ENCODE measurements at regions of chr12 and their contacts with region 1.

Region 1: GRCh38 chr12:54207484-54208294 is 18.9 kb upstream of the SMUG1 start:
- DNase-seq: peak; percentile 80
- H3K4me3 Mint-ChIP-seq: no peak overlapping the region
- H3K27ac Mint-ChIP-seq: no peak overlapping the region
- H3K4me1 Mint-ChIP-seq: peaks cover 7% of the 10 kb centered on the region
- H3K27me3 Mint-ChIP-seq: peaks cover 54% of the 10 kb centered on the region

Region 2: DNA sequence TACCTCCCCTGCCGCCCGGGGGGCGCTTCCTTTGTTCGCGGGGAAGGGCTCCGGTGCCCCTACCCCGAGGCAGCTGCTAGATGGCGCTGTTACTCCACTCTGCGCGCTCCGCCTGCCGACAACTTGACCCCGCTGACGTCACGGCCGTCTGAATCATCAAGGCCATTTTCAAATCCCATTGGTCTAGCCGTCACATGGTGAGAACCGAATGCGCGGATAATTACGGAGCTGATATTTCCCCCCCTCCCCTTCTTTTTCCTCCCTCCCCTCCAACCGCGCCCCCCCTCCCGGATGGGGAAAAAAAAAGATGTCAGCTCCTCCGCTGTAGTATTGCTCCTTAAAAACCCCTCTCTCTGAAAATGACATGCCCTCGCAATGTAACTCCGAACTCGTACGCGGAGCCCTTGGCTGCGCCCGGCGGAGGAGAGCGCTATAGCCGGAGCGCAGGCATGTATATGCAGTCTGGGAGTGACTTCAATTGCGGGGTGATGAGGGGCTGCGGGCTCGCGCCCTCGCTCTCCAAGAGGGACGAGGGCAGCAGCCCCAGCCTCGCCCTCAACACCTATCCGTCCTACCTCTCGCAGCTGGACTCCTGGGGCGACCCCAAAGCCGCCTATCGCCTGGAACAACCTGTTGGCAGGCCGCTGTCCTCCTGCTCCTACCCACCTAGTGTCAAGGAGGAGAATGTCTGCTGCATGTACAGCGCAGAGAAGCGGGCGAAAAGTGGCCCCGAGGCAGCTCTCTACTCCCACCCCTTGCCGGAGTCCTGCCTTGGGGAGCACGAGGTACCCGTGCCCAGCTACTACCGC is 222.6 kb before region 1 on chr12 and contains the start of gene HOXC10:
- CTCF ChIA-PET with region 1: interaction called, 12 read pairs
- POLR2A ChIA-PET with region 1: no interaction called
- DNase-seq: peak; percentile 88
- H3K4me3 Mint-ChIP-seq: peak within 1 kb of the TSS; percentile 48
- H3K27ac Mint-ChIP-seq: peak within 1 kb of the TSS; percentile 47
- H3K4me1 Mint-ChIP-seq: peaks cover 31% of the 10 kb centered on the region
- H3K27me3 Mint-ChIP-seq: peaks cover 94% of the 10 kb centered on the region
- total RNA-seq, gene HOXC10: not detected

Region 3: DNA sequence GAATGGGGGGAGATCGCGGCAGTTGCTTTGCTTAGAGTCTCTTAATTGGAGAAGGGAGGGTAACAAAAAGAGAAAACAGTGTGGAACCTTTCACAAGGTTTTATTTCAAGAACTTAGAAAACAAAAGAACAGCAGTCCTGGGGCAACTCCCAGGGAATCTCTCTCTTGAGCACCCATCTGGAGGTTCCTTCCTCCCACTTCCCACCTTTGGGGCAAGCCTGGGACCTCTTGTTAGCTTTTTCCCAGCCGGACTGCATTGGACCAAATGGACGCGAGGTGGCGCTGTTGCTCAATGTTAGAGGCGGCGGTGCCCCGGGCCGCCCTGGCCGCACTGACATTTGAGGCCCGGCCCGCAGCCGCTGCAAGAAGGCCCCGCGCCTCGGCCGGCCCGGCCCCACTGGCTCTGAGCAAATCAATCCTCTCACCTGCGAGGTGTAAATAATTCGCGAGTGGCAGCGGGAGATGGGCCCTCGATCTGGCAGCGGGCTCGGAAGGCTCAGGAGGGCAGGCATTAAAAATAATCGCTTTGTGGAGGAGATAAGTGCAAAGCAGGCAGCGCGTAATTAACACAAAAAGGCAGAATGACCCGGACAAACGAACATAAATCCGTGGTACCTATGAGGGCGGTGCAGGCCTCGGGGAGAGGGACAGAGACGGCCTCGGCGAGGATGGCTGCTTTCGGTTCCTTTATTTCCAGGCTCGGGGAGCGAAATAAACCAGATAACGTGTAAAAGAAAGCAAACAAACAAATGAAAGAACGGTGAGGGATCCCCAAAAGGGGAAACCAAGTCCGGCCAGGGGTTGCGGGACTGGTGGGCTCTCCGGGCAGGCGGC is 201.6 kb before region 1 on chr12:
- CTCF ChIA-PET with region 1: interaction called, 57 read pairs
- POLR2A ChIA-PET with region 1: interaction called, 4 read pairs
- DNase-seq: peak; percentile 85
- H3K4me3 Mint-ChIP-seq: peak overlapping the region; percentile 66
- H3K27ac Mint-ChIP-seq: no peak overlapping the region
- H3K4me1 Mint-ChIP-seq: peaks cover 25% of the 10 kb centered on the region
- H3K27me3 Mint-ChIP-seq: peaks cover 95% of the 10 kb centered on the region

Region 4: GRCh38 chr12:54017878-54018467 is 189.7 kb before region 1 on chr12:
- CTCF ChIA-PET with region 1: interaction called, 12 read pairs
- POLR2A ChIA-PET with region 1: no interaction called
- DNase-seq: peak; percentile 74
- H3K4me3 Mint-ChIP-seq: peak overlapping the region; percentile 73
- H3K27ac Mint-ChIP-seq: no peak overlapping the region
- H3K4me1 Mint-ChIP-seq: peaks cover 23% of the 10 kb centered on the region
- H3K27me3 Mint-ChIP-seq: peaks cover 71% of the 10 kb centered on the region

Region 5: DNA sequence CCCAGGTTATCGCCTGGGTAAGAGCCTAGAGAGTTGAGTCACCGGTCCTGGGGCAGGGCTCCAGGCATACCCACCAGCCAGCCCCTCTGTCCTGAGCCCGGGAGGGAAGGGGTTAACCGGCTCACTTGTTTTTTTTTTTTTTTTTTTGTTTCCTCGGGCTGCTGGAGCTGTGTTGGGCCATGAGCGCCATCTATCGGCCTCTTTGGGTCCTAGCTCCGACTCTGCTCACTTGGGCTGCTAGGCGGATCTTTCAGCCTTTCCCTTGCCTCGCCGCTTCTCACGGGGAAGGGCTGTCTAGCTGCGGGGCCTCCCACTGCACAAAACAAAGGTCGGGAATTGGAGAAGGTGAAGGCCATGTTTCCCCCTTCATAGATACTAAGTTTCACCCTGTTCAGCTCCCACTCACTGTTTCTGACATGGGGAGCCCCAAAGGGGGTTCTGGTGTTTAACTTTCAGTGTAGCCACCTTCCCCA is 16.1 kb before region 1 on chr12:
- CTCF ChIA-PET with region 1: interaction called, 85 read pairs
- POLR2A ChIA-PET with region 1: no interaction called
- DNase-seq: peak; percentile 81
- H3K4me3 Mint-ChIP-seq: no peak overlapping the region
- H3K27ac Mint-ChIP-seq: no peak overlapping the region
- H3K4me1 Mint-ChIP-seq: peaks cover 24% of the 10 kb centered on the region
- H3K27me3 Mint-ChIP-seq: peaks cover 49% of the 10 kb centered on the region

Region 6: GRCh38 chr12:54220092-54220557 is 12.4 kb after region 1 on chr12:
- CTCF ChIA-PET with region 1: interaction called, 34 read pairs
- POLR2A ChIA-PET with region 1: no interaction called
- DNase-seq: peak; percentile 75
- H3K4me3 Mint-ChIP-seq: no peak overlapping the region
- H3K27ac Mint-ChIP-seq: no peak overlapping the region
- H3K4me1 Mint-ChIP-seq: peaks cover 40% of the 10 kb centered on the region
- H3K27me3 Mint-ChIP-seq: peaks cover 8% of the 10 kb centered on the region